Naive thymus-derived CD4-positive, alpha-beta T cell (primary cell): ENCODE measurements at regions of chr1 and their contacts with region 1.

Region 1: DNA sequence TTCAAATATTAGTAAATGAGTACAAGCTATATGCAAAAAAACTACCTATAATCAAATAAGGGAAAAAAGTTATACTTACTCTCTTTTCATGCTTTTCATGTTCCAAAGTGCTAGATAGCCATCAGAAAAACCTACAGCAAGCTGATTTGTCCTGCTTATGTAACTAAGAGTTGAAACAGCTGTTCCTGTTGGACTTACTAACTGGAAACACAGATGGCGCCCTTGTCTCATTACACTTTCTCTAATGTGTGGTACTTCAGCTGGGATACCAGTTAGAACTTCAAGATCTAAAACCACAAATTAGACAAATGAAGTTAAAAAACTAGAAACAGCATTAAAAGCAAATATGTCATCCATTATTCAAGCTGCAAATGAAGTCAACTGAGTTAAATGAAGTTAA is 24.3 kb downstream of the AHCTF1 start:
- DNase-seq: peak in 4 of 9 donors; percentile 6 to 32 (median 22)
- ATAC-seq: peak; percentile 58
- H3K4me3 ChIP-seq: no peak overlapping the region
- H3K4me3 Mint-ChIP-seq: no peak overlapping the region
- H3K27ac ChIP-seq: no peak overlapping the region
- H3K27ac Mint-ChIP-seq: peak overlapping the region in 2 of 9 donors; percentile 25 to 51
- H3K4me1 ChIP-seq: no peaks in the 10 kb centered on the region
- H3K4me1 Mint-ChIP-seq: peaks cover 2 to 28% (median 11%) of the 10 kb centered on the region in 7 donors
- H3K27me3 ChIP-seq: no peaks in the 10 kb centered on the region
- H3K27me3 Mint-ChIP-seq: no peaks in the 10 kb centered on the region

Region 2: GRCh38 chr1:246482805-246483568 is 424.5 kb before region 1 on chr1:
- CTCF ChIA-PET with region 1: no interaction called
- POLR2A ChIA-PET with region 1: no interaction called
- intact Hi-C with region 1: no loop called
- DNase-seq: no peak
- ATAC-seq: no peak
- H3K4me3 ChIP-seq: no peak overlapping the region
- H3K4me3 Mint-ChIP-seq: peak overlapping the region in 4 of 10 donors; percentile 5 to 52 (median 26)
- H3K27ac ChIP-seq: no peak overlapping the region
- H3K27ac Mint-ChIP-seq: peak overlapping the region in 1 of 9 donors; percentile 14
- H3K4me1 ChIP-seq: peaks cover 0 to 5% of the 10 kb centered on the region in 2 donors
- H3K4me1 Mint-ChIP-seq: peaks cover 17 to 40% (median 25%) of the 10 kb centered on the region in 7 donors
- H3K27me3 ChIP-seq: no peaks in the 10 kb centered on the region
- H3K27me3 Mint-ChIP-seq: no peaks in the 10 kb centered on the region

Region 3: GRCh38 chr1:246971090-246971721 is 63.7 kb after region 1 on chr1:
- CTCF ChIA-PET with region 1: interaction called, 9 read pairs
- POLR2A ChIA-PET with region 1: no interaction called
- intact Hi-C with region 1: loop called (anchors 1 kb)
- DNase-seq: peak in 7 of 9 donors; percentile 13 to 57 (median 16)
- ATAC-seq: no peak
- H3K4me3 ChIP-seq: no peak overlapping the region
- H3K4me3 Mint-ChIP-seq: peak overlapping the region in 1 of 10 donors; percentile 34
- H3K27ac ChIP-seq: no peak overlapping the region
- H3K27ac Mint-ChIP-seq: peak overlapping the region in 1 of 9 donors; percentile 41
- H3K4me1 ChIP-seq: no peaks in the 10 kb centered on the region
- H3K4me1 Mint-ChIP-seq: peaks cover 0 to 3% (median 0%) of the 10 kb centered on the region in 7 donors
- H3K27me3 ChIP-seq: no peaks in the 10 kb centered on the region
- H3K27me3 Mint-ChIP-seq: peaks cover 0 to 11% (median 0%) of the 10 kb centered on the region in 5 donors

Region 4: GRCh38 chr1:247054992-247055415 is 147.5 kb after region 1 on chr1:
- CTCF ChIA-PET with region 1: no interaction called
- POLR2A ChIA-PET with region 1: no interaction called
- intact Hi-C with region 1: no loop called
- DNase-seq: no peak
- ATAC-seq: no peak
- H3K4me3 ChIP-seq: no peak overlapping the region
- H3K4me3 Mint-ChIP-seq: no peak overlapping the region
- H3K27ac ChIP-seq: no peak overlapping the region
- H3K27ac Mint-ChIP-seq: no peak overlapping the region
- H3K4me1 ChIP-seq: no peaks in the 10 kb centered on the region
- H3K4me1 Mint-ChIP-seq: peaks cover 0 to 12% (median 5%) of the 10 kb centered on the region in 7 donors
- H3K27me3 ChIP-seq: no peaks in the 10 kb centered on the region
- H3K27me3 Mint-ChIP-seq: no peaks in the 10 kb centered on the region